ENCODE measurements at regions of chr5 and their contacts with region 1.

Region 1: GRCh38 chr5:82091617-82092016 is 119.8 kb downstream of the ATG10 start:
- DNase-seq: no peak
- ATAC-seq: no peak
- H3K4me3 ChIP-seq: no peak overlapping the region
- H3K27ac ChIP-seq: no peak overlapping the region
- H3K4me1 ChIP-seq: no peaks in the 10 kb centered on the region
- H3K27me3 ChIP-seq: no peaks in the 10 kb centered on the region
- CTCF ChIP-seq: no peak

Region 2: DNA sequence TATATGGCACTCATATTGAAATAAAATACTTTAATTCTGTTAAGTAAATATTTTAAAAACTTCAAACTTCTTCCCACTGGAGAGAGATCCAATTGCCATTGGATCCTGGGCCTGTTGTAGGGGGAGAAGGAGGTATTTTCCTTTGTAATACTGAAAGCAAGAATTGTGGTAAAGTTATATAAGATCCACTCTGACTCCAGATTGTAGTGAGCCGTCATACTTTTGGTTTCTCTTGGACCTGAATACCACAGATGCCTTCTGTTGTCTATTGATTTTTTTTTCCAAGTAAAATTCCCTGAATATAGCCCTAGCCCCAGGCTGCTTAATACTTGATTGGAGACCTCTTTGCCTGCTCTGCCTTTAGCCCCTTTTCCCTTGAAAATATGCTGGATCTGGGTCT is 32.9 kb before region 1 on chr5:
- intact Hi-C with region 1: loop called in 1 of 2 experiments (anchors 5 kb)
- DNase-seq: no peak
- ATAC-seq: no peak
- H3K4me3 ChIP-seq: no peak overlapping the region
- H3K27ac ChIP-seq: no peak overlapping the region
- H3K4me1 ChIP-seq: no peaks in the 10 kb centered on the region
- H3K27me3 ChIP-seq: no peaks in the 10 kb centered on the region
- CTCF ChIP-seq: no peak

Region 3: GRCh38 chr5:82772281-82772680 is 680.7 kb after region 1 on chr5:
- intact Hi-C with region 1: no loop called
- DNase-seq: no peak
- ATAC-seq: no peak
- H3K4me3 ChIP-seq: no peak overlapping the region
- H3K27ac ChIP-seq: no peak overlapping the region
- H3K4me1 ChIP-seq: no peaks in the 10 kb centered on the region
- H3K27me3 ChIP-seq: no peaks in the 10 kb centered on the region
- CTCF ChIP-seq: no peak